Activated CD4-positive, alpha-beta memory T cell treated with anti-CD3 and anti-CD28 coated beads for 36 hours (primary cell): ENCODE measurements at regions of chr19 and their contacts with region 1.

Region 1: DNA sequence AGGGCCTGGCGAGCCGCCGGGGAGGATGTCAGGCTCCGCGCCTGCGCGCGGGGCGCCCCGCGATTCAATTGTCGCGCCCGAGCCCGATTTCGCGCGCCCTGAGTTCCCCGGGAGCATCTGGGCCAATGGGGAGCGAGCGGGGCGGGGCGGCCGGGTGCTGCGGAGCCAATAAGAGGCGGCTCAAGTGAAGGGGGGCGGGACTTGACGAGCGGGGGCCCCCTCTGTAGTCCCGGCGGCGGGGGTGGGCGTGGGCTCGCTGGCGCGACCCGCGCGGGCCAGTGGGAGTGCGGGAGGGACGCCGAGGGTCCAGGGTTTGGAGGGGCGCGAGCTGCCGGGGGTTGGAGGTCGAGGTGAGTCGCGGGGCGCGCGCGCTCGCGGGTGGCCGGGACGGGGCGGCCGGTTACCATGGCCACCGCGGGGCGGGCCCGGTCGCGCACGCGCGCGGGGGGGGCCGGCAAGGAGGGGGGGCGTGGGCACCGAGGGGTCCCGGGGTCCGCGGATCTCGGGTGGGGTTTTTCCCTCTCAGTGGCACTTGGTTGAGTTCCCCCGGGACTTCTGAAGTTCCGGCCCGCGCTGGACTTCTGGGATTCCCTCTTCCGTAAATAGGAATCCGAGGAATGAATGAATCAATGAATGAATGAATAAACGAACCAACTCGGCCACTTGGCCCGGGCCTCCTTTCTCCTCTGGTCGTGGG is 744 bp downstream of the UHRF1 start:
- DNase-seq: peak; percentile 97
- H3K4me3 Mint-ChIP-seq: peak overlapping the region; percentile 89
- H3K27ac Mint-ChIP-seq: peak overlapping the region; percentile 65
- H3K4me1 Mint-ChIP-seq: peaks cover 50% of the 10 kb centered on the region
- H3K27me3 Mint-ChIP-seq: no peaks in the 10 kb centered on the region

Region 2: DNA sequence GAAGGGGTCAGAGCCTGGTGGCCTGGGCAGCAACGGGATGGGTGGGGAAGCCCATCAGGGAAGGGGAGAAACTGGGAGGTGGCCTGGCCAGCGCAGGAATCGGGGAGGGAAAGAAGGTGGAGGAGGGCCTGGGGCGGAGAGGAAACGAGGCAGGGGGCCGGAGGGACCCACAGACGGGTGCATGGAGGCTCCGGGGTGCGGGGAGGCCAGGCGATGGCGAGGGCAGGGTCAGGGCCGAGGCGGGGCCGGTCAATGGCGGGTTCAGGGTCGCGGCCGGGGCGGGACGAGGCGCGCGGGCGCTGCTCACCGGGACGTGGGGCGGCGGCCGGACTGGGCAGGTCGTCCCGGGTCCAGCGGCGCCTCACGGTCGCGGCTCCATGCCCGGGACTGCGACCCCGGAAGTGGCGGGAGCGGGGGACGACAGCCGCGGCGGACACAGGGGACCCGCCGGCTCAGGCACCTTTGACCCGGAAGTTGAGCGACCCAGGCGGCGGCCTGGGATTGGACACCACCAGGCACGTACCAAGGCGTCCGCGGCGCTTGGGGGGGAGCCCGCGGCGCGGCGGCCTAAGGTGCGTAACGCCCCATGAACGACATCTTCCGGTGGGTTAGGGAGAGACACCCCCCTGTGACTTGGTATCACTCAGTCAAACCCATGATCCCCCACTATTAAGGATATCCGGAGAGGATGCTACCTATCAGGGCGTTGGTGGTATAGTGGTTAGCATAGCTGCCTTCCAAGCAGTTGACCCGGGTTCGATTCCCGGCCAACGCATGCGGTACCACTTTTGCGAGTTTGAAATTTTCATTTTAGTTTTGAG is 186.5 kb before region 1 on chr19 and contains the start of gene DPP9:
- CTCF ChIA-PET with region 1: interaction called, 3 read pairs
- POLR2A ChIA-PET with region 1: no interaction called
- intact Hi-C with region 1: loop called (anchors 2 kb)
- DNase-seq: peak; percentile 98
- H3K4me3 Mint-ChIP-seq: peak within 1 kb of the TSS; percentile 84
- H3K27ac Mint-ChIP-seq: peak within 1 kb of the TSS; percentile 95
- H3K4me1 Mint-ChIP-seq: peaks cover 28% of the 10 kb centered on the region
- H3K27me3 Mint-ChIP-seq: peaks cover 5% of the 10 kb centered on the region
- total RNA-seq, gene DPP9: 54.8 to 57.5 TPM

Region 3: GRCh38 chr19:4896372-4896771 is 13.7 kb before region 1 on chr19:
- CTCF ChIA-PET with region 1: no interaction called
- POLR2A ChIA-PET with region 1: no interaction called
- intact Hi-C with region 1: no loop called
- DNase-seq: no peak
- H3K4me3 Mint-ChIP-seq: no peak overlapping the region
- H3K27ac Mint-ChIP-seq: no peak overlapping the region
- H3K4me1 Mint-ChIP-seq: no peaks in the 10 kb centered on the region
- H3K27me3 Mint-ChIP-seq: no peaks in the 10 kb centered on the region

Region 4: GRCh38 chr19:4968462-4969291 is 58.6 kb after region 1 on chr19 and contains the start of gene KDM4B:
- CTCF ChIA-PET with region 1: interaction called, 7 read pairs
- POLR2A ChIA-PET with region 1: interaction called, 11 read pairs
- intact Hi-C with region 1: loop called (anchors 2 kb)
- DNase-seq: peak; percentile 99
- H3K4me3 Mint-ChIP-seq: peak within 1 kb of the TSS; percentile 89
- H3K27ac Mint-ChIP-seq: peak within 1 kb of the TSS; percentile 79
- H3K4me1 Mint-ChIP-seq: peaks cover 31% of the 10 kb centered on the region
- H3K27me3 Mint-ChIP-seq: no peaks in the 10 kb centered on the region
- total RNA-seq, gene KDM4B: 19.2 to 20.6 TPM

Region 5: GRCh38 chr19:5031231-5032100 is 121.4 kb after region 1 on chr19:
- CTCF ChIA-PET with region 1: interaction called, 17 read pairs
- POLR2A ChIA-PET with region 1: no interaction called
- intact Hi-C with region 1: no loop called
- DNase-seq: peak; percentile 88
- H3K4me3 Mint-ChIP-seq: no peak overlapping the region
- H3K27ac Mint-ChIP-seq: no peak overlapping the region
- H3K4me1 Mint-ChIP-seq: no peaks in the 10 kb centered on the region
- H3K27me3 Mint-ChIP-seq: no peaks in the 10 kb centered on the region